PC-3 (cell line): ENCODE measurements at regions of chr13 and their contacts with region 1.

Region 1: DNA sequence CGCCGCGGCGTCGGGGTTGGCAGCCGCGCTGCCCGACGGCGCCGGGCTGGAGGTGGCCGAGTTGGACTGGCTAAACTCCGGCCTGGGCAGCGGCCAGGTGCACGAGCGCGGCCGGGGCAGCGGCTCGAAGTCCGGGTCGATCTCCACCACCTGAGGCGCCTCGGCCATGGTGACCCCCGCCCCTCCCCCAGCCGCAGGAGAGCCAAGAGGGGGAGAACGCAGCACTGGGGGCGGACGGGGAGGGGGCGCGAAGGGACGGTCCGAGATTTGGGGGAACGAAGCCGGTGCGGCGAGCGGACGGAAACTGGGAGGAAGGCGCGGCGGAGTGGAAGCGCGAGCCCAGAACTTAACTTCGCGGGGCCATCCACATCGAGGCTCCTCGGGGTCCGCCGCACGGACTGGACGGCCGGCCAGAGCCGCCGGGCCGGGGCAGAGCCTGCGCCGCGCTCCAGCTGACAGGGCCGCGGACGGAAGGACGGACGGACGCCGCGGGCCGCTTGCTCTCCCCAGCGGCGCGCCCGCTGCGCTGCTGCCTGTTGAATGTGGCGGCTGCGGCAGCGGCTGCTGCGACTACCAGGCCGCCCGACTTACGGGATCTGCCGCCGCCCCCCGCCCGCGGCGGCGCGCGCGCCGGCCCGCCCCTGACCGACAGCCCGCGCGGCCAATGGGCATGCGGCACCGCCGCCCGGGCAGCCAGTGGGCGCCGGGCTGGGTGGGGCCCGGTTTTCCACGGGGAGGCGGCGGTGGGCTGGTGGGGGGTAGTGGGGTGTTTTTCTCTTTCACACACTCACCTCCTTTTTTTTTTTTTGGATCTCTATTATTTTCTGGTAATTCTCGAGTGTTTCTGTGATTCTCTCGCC is at the start of gene FOXO1:
- DNase-seq: peak; percentile 78
- ATAC-seq: peak; percentile 78
- H3K4me3 ChIP-seq: peak within 1 kb of the TSS; percentile 91
- H3K27ac ChIP-seq: peak within 1 kb of the TSS; percentile 13; the same call in 1 of the 2 replicates
- H3K4me1 ChIP-seq: peaks cover 14% of the 10 kb centered on the region
- H3K27me3 ChIP-seq: no peaks in the 10 kb centered on the region
- CTCF ChIP-seq: no peak
- total RNA-seq, gene FOXO1: 2.7 and 3.5 TPM in 2 replicates

Region 2: GRCh38 chr13:39935155-39935554 is 731.1 kb before region 1 on chr13:
- CTCF ChIA-PET with region 1: no interaction called
- POLR2A ChIA-PET with region 1: no interaction called
- intact Hi-C with region 1: no loop called
- DNase-seq: no peak
- ATAC-seq: no peak
- H3K4me3 ChIP-seq: no peak overlapping the region
- H3K27ac ChIP-seq: no peak overlapping the region
- H3K4me1 ChIP-seq: no peaks in the 10 kb centered on the region
- H3K27me3 ChIP-seq: no peaks in the 10 kb centered on the region
- CTCF ChIP-seq: no peak

Region 3: DNA sequence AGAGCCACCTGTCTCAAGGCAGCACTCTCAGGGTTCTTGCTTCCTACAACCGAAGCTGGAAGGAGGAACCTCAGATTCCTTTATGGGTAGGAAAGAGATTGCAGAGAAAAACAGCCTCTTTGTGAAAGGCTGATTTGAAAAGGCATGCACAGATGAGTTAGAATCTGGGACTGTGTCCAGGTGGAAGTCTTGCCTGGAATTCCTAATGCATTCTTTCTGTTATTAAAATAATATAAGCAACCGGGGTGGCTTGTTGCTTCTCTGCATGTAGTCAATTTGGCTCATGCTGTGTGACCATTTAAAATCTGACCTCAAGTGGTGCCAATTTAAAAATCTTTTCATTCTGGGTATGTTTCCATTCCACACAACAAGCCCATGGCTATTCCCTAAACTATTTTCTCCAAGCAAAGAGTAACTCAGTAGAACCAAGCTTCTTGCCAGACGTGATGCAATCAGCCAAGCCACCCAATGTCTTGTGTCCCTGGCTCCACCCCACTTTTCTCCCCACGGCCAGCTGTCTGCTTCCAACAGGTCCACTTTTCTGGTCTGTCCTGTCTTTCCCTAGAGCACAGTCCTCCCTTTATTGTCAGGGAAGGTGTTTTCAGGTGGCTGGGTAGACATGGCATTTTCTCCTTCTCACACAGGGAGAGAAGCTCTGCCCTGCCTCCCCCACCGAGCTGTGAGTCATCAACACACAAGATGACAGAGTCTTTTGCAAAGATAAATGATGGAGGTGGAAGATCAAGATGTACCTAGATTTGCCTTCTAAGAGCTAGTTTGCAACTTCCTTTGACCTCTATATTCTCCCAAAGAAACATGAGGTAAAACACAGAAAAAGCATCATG is 394.1 kb before region 1 on chr13:
- CTCF ChIA-PET with region 1: no interaction called
- POLR2A ChIA-PET with region 1: no interaction called
- intact Hi-C with region 1: loop called (anchors 10 kb)
- DNase-seq: peak; percentile 71
- ATAC-seq: peak; percentile 44
- H3K4me3 ChIP-seq: no peak overlapping the region
- H3K27ac ChIP-seq: peak overlapping the region; percentile 70
- H3K4me1 ChIP-seq: peaks cover 45% of the 10 kb centered on the region
- H3K27me3 ChIP-seq: no peaks in the 10 kb centered on the region
- CTCF ChIP-seq: no peak

Region 4: DNA sequence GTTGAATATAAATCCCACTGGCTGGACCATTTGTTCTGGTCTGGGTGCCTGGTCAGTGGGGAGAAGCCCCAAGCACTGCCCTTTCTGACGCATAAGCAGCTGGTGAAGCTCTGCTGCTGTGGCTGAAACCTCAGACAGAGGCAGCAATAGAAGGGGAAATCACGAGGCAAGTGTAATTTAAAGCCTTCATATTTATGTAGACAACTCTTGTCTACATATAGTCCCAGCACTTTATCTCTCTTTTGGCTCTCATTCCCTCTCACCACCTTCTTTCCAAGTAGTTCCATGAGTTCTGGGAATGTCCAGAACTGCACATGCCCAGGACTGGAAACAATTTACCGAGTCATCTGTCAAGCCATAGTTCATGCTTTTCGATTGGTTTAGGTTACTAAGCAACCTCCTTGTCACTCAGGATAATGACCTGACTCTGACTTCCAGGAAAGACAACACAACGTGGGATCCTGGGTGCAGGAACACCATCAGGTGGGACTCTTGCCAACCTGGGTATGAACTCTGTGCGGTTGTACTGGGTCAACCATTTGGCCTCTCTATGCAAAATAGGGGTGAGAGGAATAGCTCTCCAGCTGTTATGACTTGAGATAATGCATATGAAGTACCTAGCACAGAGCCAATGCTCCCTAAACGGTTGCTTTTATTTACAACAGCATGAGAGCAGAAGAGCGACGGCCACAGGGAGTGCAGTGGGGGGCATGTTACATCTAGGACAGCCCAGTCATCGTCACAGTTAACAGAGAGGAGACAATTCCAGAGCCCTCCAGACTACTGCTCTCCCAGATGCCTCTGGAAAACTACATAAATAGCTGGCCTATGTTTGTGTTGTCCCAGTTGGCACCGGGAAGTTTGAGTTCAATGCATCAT is 321.8 kb before region 1 on chr13:
- CTCF ChIA-PET with region 1: no interaction called
- POLR2A ChIA-PET with region 1: no interaction called
- intact Hi-C with region 1: loop called (anchors 10 kb)
- DNase-seq: no peak
- ATAC-seq: no peak
- H3K4me3 ChIP-seq: no peak overlapping the region
- H3K27ac ChIP-seq: no peak overlapping the region
- H3K4me1 ChIP-seq: no peaks in the 10 kb centered on the region
- H3K27me3 ChIP-seq: no peaks in the 10 kb centered on the region
- CTCF ChIP-seq: no peak

Region 5: DNA sequence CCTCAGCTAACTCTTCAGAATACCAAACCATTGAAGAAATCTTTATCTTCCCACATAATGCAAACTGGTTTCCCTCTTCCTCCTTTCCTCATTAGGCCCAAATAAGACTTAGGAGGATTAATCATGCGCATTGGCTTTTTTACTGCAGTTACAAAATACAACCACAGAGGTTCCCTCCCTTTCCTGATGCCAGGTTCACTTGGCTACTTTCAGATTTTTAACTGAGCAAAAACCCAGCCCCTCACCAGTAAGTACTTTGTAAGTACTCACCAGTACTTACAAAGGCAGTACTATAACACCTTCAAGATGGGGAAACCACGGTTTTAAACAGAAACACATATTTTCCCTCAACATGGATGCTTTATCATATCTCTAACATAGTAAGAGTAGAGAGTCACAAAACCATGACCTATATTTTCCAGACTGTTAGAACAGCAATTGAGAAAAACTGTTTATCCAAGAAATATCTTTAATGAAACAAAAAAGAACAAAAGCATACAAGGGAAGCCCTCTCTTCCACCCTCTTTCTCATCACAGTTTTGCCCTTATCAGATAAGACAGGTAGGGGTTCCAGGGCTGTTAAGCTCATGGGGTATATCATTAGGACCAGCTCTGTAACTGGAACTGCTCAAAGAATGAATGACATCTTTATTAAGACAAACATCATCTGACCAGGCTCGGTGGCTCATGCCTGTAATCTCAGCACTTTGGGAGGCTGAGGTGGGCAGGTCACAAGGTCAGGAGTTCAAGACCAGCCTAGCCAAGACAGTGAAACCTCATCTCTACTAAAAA is 12.6 kb before region 1 on chr13:
- CTCF ChIA-PET with region 1: no interaction called
- POLR2A ChIA-PET with region 1: no interaction called
- intact Hi-C with region 1: no loop called
- DNase-seq: no peak
- ATAC-seq: no peak
- H3K4me3 ChIP-seq: no peak overlapping the region
- H3K27ac ChIP-seq: no peak overlapping the region
- H3K4me1 ChIP-seq: peaks cover 4% of the 10 kb centered on the region; the same call in 1 of the 2 replicates
- H3K27me3 ChIP-seq: no peaks in the 10 kb centered on the region
- CTCF ChIP-seq: no peak

Region 6: GRCh38 chr13:41678249-41678648 is 1012.0 kb after region 1 on chr13:
- CTCF ChIA-PET with region 1: no interaction called
- POLR2A ChIA-PET with region 1: no interaction called
- intact Hi-C with region 1: no loop called
- DNase-seq: no peak
- ATAC-seq: peak; percentile 29; the same call in 1 of the 2 replicates
- H3K4me3 ChIP-seq: no peak overlapping the region
- H3K27ac ChIP-seq: no peak overlapping the region
- H3K4me1 ChIP-seq: no peaks in the 10 kb centered on the region
- H3K27me3 ChIP-seq: no peaks in the 10 kb centered on the region
- CTCF ChIP-seq: no peak

Region 7: DNA sequence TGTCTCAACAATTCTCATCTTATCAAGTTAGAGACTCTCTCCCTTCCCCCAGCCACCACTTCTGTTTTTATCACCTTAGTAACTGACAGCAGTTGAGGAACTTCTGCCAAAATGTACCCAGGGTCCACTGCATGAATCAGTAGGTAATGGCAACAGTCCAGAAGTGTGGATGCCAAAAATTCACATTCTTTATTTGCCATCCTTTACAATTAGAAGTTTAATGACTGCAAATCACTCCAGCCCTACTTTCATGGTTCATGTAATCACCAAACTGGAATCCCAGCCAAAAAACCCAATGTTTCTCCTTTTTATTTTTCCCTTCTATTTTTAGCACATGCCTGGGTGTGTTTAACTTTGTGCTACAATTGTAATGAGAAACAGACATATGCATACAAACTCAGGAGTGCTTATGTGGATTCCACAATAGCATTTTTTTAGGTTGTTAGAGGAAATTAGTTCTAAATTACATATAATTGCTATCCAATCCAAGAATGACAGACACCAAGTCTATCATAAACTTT is 1034.6 kb after region 1 on chr13:
- CTCF ChIA-PET with region 1: no interaction called
- POLR2A ChIA-PET with region 1: no interaction called
- intact Hi-C with region 1: no loop called
- DNase-seq: peak; percentile 85
- ATAC-seq: peak; percentile 66
- H3K4me3 ChIP-seq: no peak overlapping the region
- H3K27ac ChIP-seq: peak overlapping the region; percentile 80
- H3K4me1 ChIP-seq: peaks cover 47% of the 10 kb centered on the region
- H3K27me3 ChIP-seq: no peaks in the 10 kb centered on the region
- CTCF ChIP-seq: no peak